Activated T-helper 1 cell treated with anti-CD3 and anti-CD28 coated beads, Interleukin-12 subunit alpha, Interleukin-12 subunit beta, Interleukin-2, Interleukin-4 antibody, amounts not matched to agents 30 ng/mL and 10 ng/mL and 1 ng/mL, durations not matched to agents 14 hours and 24 hours and 36 hours (primary cell): ENCODE measurements at regions of chr5 and their contacts with region 1.

Region 1: DNA sequence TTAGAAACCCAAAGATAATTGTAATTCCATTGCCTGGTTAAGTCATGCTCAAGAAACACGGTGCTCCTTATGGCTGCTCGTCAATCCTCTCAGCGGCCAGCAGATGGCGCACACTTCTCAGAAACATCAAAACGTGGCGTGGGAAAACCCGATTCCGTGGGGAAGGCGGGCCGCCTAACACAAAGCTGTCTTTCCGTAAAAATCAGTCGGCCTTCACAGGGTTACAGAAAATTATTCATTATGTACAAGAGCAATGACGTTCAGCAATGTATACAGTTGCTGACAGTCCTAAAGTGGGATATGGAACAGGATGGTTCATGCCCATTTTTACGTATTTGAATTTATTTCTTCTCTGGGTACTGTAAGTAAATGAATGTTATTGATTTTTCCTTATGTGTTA is 83.5 kb downstream of the PDE4D start:
- DNase-seq: peak; percentile 36
- H3K4me3 Mint-ChIP-seq: no peak overlapping the region
- H3K27ac Mint-ChIP-seq: no peak overlapping the region
- H3K4me1 Mint-ChIP-seq: peaks cover 5% of the 10 kb centered on the region
- H3K27me3 Mint-ChIP-seq: peaks cover 23% of the 10 kb centered on the region

Region 2: DNA sequence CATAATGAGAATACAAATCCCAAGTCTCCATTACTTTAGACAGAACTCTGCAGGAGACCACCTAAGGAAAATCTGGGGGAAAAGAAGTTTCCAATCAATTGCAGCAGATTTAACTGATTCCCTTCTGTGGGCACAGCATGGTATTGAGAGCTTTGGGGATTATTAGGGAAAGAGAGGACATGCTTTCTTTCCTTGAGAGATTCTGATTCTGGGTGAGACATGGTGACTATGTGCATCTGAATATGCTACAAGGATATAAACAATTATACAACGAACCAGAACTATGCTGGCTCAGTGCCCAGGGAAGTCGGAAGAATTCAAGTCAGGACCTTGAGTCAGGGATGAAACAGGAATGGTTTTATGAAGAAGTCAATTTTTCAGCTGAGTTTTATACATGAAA is 100.2 kb before region 1 on chr5:
- intact Hi-C with region 1: no loop called
- DNase-seq: no peak
- H3K4me3 Mint-ChIP-seq: no peak overlapping the region
- H3K27ac Mint-ChIP-seq: no peak overlapping the region
- H3K4me1 Mint-ChIP-seq: no peaks in the 10 kb centered on the region
- H3K27me3 Mint-ChIP-seq: peaks cover 3% of the 10 kb centered on the region

Region 3: DNA sequence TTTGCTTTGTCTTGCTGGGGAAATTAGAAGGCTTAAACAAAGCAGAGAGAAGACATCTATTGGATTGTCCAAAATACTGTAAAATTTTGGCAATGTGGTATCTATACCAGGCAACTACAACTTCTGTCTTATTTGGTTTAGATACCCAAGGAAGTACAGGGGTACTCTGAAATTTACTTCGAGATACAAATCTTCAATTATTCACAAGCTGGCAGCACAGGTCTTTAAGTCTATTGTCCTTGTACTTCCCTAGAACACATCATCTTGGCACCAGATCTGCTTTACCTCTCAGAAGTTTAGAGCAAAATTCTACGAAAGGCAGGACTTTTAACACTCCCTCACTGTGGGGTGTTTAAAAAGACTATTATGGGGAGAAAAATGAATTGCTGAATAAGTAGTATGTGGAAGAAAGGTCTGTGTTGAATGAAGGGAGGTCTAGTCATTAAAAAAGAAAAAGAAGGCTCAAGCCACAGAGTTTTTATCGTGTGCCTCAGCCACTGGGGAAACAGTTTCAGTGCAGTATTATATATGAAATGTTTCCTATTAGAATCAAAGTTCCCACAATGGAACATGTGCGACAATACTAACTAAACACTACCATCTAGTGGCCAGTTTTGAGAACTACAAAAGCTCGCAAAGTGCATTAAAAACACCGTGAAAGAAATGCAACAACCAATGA is 10.2 kb before region 1 on chr5:
- intact Hi-C with region 1: no loop called
- DNase-seq: peak; percentile 15
- H3K4me3 Mint-ChIP-seq: no peak overlapping the region
- H3K27ac Mint-ChIP-seq: no peak overlapping the region
- H3K4me1 Mint-ChIP-seq: no peaks in the 10 kb centered on the region
- H3K27me3 Mint-ChIP-seq: peaks cover 11% of the 10 kb centered on the region

Region 4: GRCh38 chr5:60161340-60161934 is 351.4 kb after region 1 on chr5:
- intact Hi-C with region 1: loop called (anchors 2 kb)
- DNase-seq: no peak
- H3K4me3 Mint-ChIP-seq: no peak overlapping the region
- H3K27ac Mint-ChIP-seq: no peak overlapping the region
- H3K4me1 Mint-ChIP-seq: no peaks in the 10 kb centered on the region
- H3K27me3 Mint-ChIP-seq: no peaks in the 10 kb centered on the region

Region 5: DNA sequence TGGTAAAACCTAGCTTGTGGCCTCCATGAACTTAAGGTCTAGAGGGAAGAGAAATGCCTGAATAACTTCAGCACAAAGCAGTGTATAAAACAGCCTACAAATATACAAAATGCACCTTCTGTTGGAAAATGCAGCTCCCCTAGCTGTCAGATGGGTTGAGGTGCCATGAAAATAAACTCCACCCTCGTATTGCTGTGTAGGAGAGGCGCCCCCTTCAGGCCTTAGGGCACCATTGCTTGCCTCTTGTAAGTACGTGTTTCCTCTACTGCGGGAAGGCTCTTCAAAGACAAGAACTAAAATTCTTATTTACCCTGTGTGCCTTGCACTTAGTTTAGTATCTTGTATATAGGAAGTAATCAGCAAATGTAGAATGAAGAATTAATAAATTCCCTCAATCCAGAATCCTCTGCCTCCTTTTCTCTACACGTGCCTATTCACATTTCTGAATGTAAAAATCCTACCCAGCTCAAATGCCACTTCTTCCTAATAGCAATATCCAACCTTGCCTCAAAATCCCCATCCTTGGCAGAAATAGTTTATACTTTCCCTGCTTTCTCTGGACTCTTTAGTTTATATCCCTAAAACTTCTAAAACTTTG is 477.2 kb after region 1 on chr5:
- intact Hi-C with region 1: loop called (anchors 2 kb)
- DNase-seq: no peak
- H3K4me3 Mint-ChIP-seq: no peak overlapping the region
- H3K27ac Mint-ChIP-seq: no peak overlapping the region
- H3K4me1 Mint-ChIP-seq: no peaks in the 10 kb centered on the region
- H3K27me3 Mint-ChIP-seq: no peaks in the 10 kb centered on the region

Region 6: GRCh38 chr5:60382716-60383115 is 572.7 kb after region 1 on chr5:
- intact Hi-C with region 1: loop called (anchors 5 kb)
- DNase-seq: no peak
- H3K4me3 Mint-ChIP-seq: no peak overlapping the region
- H3K27ac Mint-ChIP-seq: no peak overlapping the region
- H3K4me1 Mint-ChIP-seq: no peaks in the 10 kb centered on the region
- H3K27me3 Mint-ChIP-seq: peaks cover 2% of the 10 kb centered on the region

Region 7: GRCh38 chr5:60649283-60649917 is 839.4 kb after region 1 on chr5:
- intact Hi-C with region 1: loop called (anchors 1 kb)
- DNase-seq: no peak
- H3K4me3 Mint-ChIP-seq: no peak overlapping the region
- H3K27ac Mint-ChIP-seq: no peak overlapping the region
- H3K4me1 Mint-ChIP-seq: no peaks in the 10 kb centered on the region
- H3K27me3 Mint-ChIP-seq: no peaks in the 10 kb centered on the region

Region 8: DNA sequence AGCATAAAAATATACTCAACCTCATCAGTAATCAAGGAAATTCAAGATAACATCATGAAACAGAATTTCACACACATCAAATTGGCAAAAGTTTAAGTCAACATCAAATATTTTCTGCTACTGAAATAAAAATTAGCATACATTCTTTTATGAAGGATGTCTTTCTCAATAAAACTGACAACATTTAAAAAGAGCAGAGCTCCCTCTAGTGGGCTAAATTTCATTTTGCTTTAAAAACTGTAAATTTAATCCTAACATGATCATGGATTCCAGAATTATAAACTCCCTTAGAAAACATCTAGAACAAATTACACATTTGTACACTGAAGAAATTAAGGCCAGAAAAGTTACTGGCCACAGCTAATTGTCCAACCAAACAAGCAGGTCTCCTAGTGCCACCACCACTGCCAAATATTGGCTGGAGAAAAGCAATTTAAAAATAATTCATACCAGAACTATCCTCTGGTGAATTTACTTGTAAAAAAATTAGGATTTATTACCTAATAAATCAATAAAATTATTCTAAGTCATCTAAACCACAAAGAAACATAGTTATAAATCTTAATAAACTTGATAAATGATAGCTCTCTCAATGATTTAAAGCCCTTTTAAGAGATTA is 858.8 kb after region 1 on chr5:
- intact Hi-C with region 1: loop called (anchors 1 kb)
- DNase-seq: no peak
- H3K4me3 Mint-ChIP-seq: no peak overlapping the region
- H3K27ac Mint-ChIP-seq: no peak overlapping the region
- H3K4me1 Mint-ChIP-seq: peaks cover 9% of the 10 kb centered on the region
- H3K27me3 Mint-ChIP-seq: no peaks in the 10 kb centered on the region